ENCODE measurements at regions of chr14 and their contacts with region 1.

Region 1: GRCh38 chr14:53152890-53153701 is at the start of gene DDHD1:
- DNase-seq: peak; percentile 76 to 88 (median 85)
- ATAC-seq: peak; percentile 95
- H3K4me3 ChIP-seq: peak within 1 kb of the TSS; percentile 86
- H3K4me3 Mint-ChIP-seq: peak within 1 kb of the TSS; percentile 95 to 100 (median 98)
- H3K27ac ChIP-seq: peak within 1 kb of the TSS; percentile 87
- H3K27ac Mint-ChIP-seq: peak within 1 kb of the TSS; percentile 94 to 99 (median 98)
- H3K4me1 ChIP-seq: peaks cover 32 to 34% of the 10 kb centered on the region in 2 donors
- H3K4me1 Mint-ChIP-seq: peaks cover 34 to 55% (median 51%) of the 10 kb centered on the region in 7 donors
- H3K27me3 ChIP-seq: no peaks in the 10 kb centered on the region
- H3K27me3 Mint-ChIP-seq: no peaks in the 10 kb centered on the region
- total RNA-seq, gene DDHD1: 46.7 to 103 (median 55.5) TPM

Region 2: GRCh38 chr14:51651388-51652167 is 1501.5 kb before region 1 on chr14 and contains the start of gene FRMD6:
- CTCF ChIA-PET with region 1: no interaction called
- POLR2A ChIA-PET with region 1: no interaction called
- intact Hi-C with region 1: loop called in 1 of 2 experiments (anchors 1 kb)
- DNase-seq: peak; percentile 75 to 90 (median 83)
- ATAC-seq: peak; percentile 90
- H3K4me3 ChIP-seq: peak within 1 kb of the TSS; percentile 76
- H3K4me3 Mint-ChIP-seq: peak within 1 kb of the TSS; percentile 77 to 89 (median 84)
- H3K27ac ChIP-seq: peak within 1 kb of the TSS; percentile 78
- H3K27ac Mint-ChIP-seq: peak within 1 kb of the TSS in 8 of 9 donors; percentile 20 to 83 (median 73)
- H3K4me1 ChIP-seq: peaks cover 6 to 18% of the 10 kb centered on the region in 2 donors
- H3K4me1 Mint-ChIP-seq: peaks cover 12 to 29% (median 18%) of the 10 kb centered on the region in 7 donors
- H3K27me3 ChIP-seq: peaks cover 0 to 12% of the 10 kb centered on the region in 2 donors
- H3K27me3 Mint-ChIP-seq: peaks cover 9 to 31% (median 19%) of the 10 kb centered on the region in 5 donors
- total RNA-seq, gene FRMD6: 0.93 to 4.8 (median 3.9) TPM

Region 3: DNA sequence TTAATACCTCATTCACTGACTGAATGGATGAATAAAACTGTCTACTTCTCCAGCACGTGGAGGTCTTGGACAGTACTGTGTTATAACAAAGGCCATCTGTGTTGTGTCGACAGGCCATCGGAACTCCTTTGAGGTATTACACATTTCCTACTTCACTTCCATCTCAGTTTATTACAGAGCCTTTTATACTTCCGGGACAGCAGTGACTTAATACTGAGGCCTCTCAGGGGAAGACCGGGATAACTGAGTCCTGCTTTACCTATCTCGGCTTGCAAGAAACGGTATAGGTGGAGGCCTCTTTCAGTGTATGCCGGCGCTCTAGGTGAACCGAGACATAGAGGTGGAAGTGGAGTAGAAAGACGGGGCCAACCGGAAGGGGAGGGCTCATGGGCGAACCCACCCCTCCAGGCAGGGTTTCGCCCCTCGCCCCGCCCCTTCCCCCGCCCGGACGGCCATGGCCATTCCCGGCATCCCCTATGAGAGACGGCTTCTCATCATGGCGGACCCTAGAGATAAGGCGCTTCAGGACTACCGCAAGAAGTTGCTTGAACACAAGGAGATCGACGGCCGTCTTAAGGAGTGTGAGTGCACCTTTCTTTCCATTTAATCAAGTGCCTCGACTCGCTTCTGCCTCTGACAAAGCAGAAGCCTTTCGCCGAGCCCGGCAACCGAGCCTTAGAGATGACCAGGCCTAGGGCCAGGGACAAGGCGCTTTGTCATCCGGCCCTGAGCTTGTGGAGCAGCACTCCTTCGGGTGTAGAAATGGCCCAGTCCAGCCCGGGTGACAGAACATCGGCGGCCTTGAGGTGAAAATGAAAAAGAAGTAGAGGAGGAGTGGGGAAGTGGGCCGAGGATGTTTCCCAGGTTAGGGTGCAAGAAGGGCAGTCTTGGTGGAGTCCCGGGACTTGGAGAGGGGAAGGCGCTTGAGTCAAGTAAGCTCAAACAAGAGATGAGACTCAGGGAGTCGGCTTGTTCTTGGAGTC is 446.1 kb before region 1 on chr14 and contains the start of gene PSMC6:
- CTCF ChIA-PET with region 1: no interaction called
- POLR2A ChIA-PET with region 1: interaction called, 3 read pairs
- intact Hi-C with region 1: loop called in 1 of 2 experiments (anchors 1 kb)
- DNase-seq: peak; percentile 82 to 93 (median 90)
- ATAC-seq: peak; percentile 99
- H3K4me3 ChIP-seq: peak within 1 kb of the TSS; percentile 74
- H3K4me3 Mint-ChIP-seq: peak within 1 kb of the TSS; percentile 96 to 100 (median 98)
- H3K27ac ChIP-seq: peak within 1 kb of the TSS; percentile 82
- H3K27ac Mint-ChIP-seq: peak within 1 kb of the TSS; percentile 95 to 98 (median 97)
- H3K4me1 ChIP-seq: peaks cover 11 to 16% of the 10 kb centered on the region in 2 donors
- H3K4me1 Mint-ChIP-seq: peaks cover 28 to 60% (median 52%) of the 10 kb centered on the region in 7 donors
- H3K27me3 ChIP-seq: no peaks in the 10 kb centered on the region
- H3K27me3 Mint-ChIP-seq: no peaks in the 10 kb centered on the region
- total RNA-seq, gene PSMC6: 84.8 to 131 (median 95.9) TPM

Region 4: DNA sequence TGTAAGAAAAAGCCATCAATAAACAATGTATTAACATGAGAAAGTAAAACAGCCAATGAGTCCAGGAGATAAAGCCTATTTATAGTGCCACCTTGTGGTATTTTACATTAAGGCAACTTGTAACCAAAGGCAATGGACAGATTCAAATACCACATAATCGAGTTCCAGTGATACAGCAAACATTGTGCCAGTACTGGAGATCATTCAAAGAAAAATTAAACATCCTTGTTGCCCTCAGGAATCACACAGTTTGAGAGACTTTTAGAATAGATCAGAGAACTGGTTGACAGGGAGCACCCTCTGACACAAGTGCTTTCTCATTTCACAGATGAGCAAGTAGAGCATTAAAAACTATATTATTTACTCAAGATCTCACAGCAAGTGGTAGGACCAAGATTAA is 98.1 kb before region 1 on chr14:
- CTCF ChIA-PET with region 1: interaction called, 8 read pairs
- POLR2A ChIA-PET with region 1: interaction called, 3 read pairs
- intact Hi-C with region 1: loop called (anchors 1 to 5 kb)
- DNase-seq: peak in 7 of 9 donors; percentile 8 to 47 (median 30)
- ATAC-seq: peak; percentile 76
- H3K4me3 ChIP-seq: no peak overlapping the region
- H3K4me3 Mint-ChIP-seq: no peak overlapping the region
- H3K27ac ChIP-seq: no peak overlapping the region
- H3K27ac Mint-ChIP-seq: peak overlapping the region in 3 of 9 donors; percentile 11 to 40 (median 19)
- H3K4me1 ChIP-seq: no peaks in the 10 kb centered on the region
- H3K4me1 Mint-ChIP-seq: peaks cover 0 to 11% (median 4%) of the 10 kb centered on the region in 7 donors
- H3K27me3 ChIP-seq: no peaks in the 10 kb centered on the region
- H3K27me3 Mint-ChIP-seq: no peaks in the 10 kb centered on the region

Region 5: DNA sequence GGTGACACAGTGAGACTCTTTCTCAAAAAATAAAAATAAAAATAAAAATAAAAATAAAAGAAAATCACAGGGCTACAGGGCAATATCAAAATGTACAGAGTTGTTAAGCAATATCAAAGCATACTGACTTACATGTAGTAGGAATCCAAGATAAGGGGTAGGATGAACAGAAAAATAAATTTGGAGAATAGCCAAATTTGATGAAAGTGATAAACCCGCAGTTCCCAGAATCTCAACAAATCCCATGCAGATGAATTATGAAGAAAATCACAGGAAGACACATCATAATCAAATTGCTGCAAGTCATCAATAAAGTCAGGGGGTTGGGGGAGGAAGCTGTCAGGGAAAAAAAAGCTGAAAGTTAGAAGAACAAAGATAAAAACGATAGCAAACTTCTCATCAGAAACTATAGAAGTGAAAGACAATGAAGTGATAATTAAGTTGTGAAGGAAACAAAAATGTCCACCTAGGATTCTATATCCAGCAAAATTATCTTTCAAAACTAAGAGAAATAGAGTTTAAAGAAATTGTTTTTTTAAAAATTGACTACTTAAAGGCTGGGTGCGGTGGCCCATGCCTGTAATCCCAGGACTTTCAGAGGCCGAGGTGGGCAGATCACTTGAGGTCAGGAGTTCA is 15.4 kb before region 1 on chr14:
- CTCF ChIA-PET with region 1: interaction called, 4 read pairs
- POLR2A ChIA-PET with region 1: interaction called, 14 read pairs
- intact Hi-C with region 1: loop called (anchors 1 kb)
- DNase-seq: no peak
- ATAC-seq: no peak
- H3K4me3 ChIP-seq: no peak overlapping the region
- H3K4me3 Mint-ChIP-seq: peak overlapping the region in 2 of 10 donors; percentile 19 to 36
- H3K27ac ChIP-seq: no peak overlapping the region
- H3K27ac Mint-ChIP-seq: no peak overlapping the region
- H3K4me1 ChIP-seq: peaks cover 3% of the 10 kb centered on the region in 2 donors
- H3K4me1 Mint-ChIP-seq: peaks cover 7 to 43% (median 22%) of the 10 kb centered on the region in 7 donors
- H3K27me3 ChIP-seq: no peaks in the 10 kb centered on the region
- H3K27me3 Mint-ChIP-seq: no peaks in the 10 kb centered on the region

Region 6: DNA sequence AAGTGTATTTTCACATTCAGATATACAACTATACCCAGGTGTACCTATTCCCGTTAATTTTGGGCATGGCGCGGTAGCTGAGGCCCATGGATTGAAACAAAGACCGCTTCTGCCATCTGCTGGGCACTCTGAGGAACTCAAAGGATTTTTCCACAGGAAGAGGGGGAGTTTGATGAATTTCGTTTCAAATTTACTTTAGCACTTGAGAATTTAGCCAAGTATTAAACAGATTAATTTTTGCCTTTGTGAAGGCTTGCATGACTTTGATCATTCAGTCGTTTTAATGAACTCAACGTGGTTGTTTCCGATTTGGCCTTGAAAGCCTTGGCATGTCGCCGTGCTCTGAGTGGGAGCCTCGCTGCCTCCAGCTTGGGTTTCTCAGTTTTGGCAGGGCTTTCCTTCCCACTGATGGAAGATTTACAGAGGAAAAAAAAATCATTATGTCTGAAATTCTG is 153.2 kb after region 1 on chr14:
- CTCF ChIA-PET with region 1: no interaction called
- POLR2A ChIA-PET with region 1: no interaction called
- intact Hi-C with region 1: loop called in 1 of 2 experiments (anchors 5 kb)
- DNase-seq: peak in 7 of 9 donors; percentile 2 to 44 (median 34)
- ATAC-seq: peak; percentile 55
- H3K4me3 ChIP-seq: peak overlapping the region; percentile 46
- H3K4me3 Mint-ChIP-seq: peak overlapping the region; percentile 52 to 83 (median 70)
- H3K27ac ChIP-seq: no peak overlapping the region
- H3K27ac Mint-ChIP-seq: peak overlapping the region in 1 of 9 donors; percentile 13
- H3K4me1 ChIP-seq: peaks cover 0 to 3% of the 10 kb centered on the region in 2 donors
- H3K4me1 Mint-ChIP-seq: peaks cover 0 to 16% (median 6%) of the 10 kb centered on the region in 7 donors
- H3K27me3 ChIP-seq: no peaks in the 10 kb centered on the region
- H3K27me3 Mint-ChIP-seq: peaks cover 0 to 16% (median 0%) of the 10 kb centered on the region in 5 donors

Region 7: DNA sequence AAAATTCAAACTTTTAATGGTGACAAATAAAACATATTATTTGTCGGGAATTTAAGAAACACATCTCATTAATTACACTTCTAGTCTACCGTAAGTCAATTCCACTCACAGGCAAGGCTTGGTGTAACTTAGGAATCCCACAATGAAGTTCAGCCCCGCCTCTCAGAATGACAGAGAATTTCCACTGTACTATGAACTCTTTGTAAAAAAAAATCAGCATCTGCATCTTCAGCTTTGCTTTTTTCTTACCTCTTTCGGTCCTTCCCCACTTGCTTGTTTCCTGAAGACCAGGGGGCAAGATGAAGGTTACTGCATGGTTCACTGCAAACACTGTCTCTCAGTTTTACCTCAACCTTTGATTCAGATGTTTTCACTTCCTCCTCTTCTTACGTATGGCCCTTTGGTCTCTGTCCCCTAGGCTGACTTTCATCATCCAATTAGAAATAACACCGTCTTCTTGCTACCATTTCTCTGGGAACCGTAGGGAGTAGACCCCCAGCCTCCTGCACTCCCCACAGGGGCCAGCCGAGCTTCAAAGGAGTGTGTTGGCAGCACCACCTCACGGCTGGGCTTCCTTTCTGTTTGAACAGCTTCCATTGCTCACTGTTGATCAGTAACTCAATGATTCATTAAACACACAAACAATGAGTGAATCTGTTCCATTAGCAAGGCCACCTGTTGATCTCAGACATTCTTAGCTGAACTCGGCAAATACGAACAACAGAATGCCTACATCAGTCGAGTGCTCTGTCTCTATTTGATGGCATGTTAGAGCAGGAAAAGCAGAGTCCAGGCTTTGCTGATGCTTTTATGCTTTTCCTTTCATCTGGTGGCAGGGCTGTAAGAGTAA is 460.5 kb after region 1 on chr14:
- CTCF ChIA-PET with region 1: no interaction called
- POLR2A ChIA-PET with region 1: no interaction called
- intact Hi-C with region 1: no loop called
- DNase-seq: no peak
- ATAC-seq: no peak
- H3K4me3 ChIP-seq: no peak overlapping the region
- H3K4me3 Mint-ChIP-seq: no peak overlapping the region
- H3K27ac ChIP-seq: no peak overlapping the region
- H3K27ac Mint-ChIP-seq: no peak overlapping the region
- H3K4me1 ChIP-seq: no peaks in the 10 kb centered on the region
- H3K4me1 Mint-ChIP-seq: no peaks in the 10 kb centered on the region
- H3K27me3 ChIP-seq: no peaks in the 10 kb centered on the region
- H3K27me3 Mint-ChIP-seq: peaks cover 0 to 13% (median 0%) of the 10 kb centered on the region in 5 donors

Region 8: GRCh38 chr14:54488646-54489317 is 1335.7 kb after region 1 on chr14 and contains the start of gene GMFB:
- CTCF ChIA-PET with region 1: no interaction called
- POLR2A ChIA-PET with region 1: no interaction called
- intact Hi-C with region 1: loop called in 1 of 2 experiments (anchors 2 kb)
- DNase-seq: peak; percentile 72 to 88 (median 84)
- ATAC-seq: peak; percentile 97
- H3K4me3 ChIP-seq: peak within 1 kb of the TSS; percentile 65
- H3K4me3 Mint-ChIP-seq: peak within 1 kb of the TSS; percentile 80 to 96 (median 92)
- H3K27ac ChIP-seq: peak within 1 kb of the TSS; percentile 86
- H3K27ac Mint-ChIP-seq: peak within 1 kb of the TSS; percentile 77 to 99 (median 97)
- H3K4me1 ChIP-seq: peaks cover 17 to 18% of the 10 kb centered on the region in 2 donors
- H3K4me1 Mint-ChIP-seq: peaks cover 42 to 69% (median 63%) of the 10 kb centered on the region in 7 donors
- H3K27me3 ChIP-seq: no peaks in the 10 kb centered on the region
- H3K27me3 Mint-ChIP-seq: peaks cover 0 to 3% (median 0%) of the 10 kb centered on the region in 5 donors
- total RNA-seq, gene GMFB: 28.9 to 39.9 (median 34.7) TPM